Activated naive CD4-positive, alpha-beta T cell treated with anti-CD3 and anti-CD28 coated beads for 36 hours (primary cell): ENCODE measurements at regions of chr16 and their contacts with region 1.

Region 1: GRCh38 chr16:22001591-22001990 is 675 bp upstream of the PDZD9 start:
- DNase-seq: no peak
- H3K4me3 Mint-ChIP-seq: no peak overlapping the region
- H3K27ac Mint-ChIP-seq: no peak overlapping the region
- H3K4me1 Mint-ChIP-seq: peaks cover 7% of the 10 kb centered on the region
- H3K27me3 Mint-ChIP-seq: no peaks in the 10 kb centered on the region

Region 2: GRCh38 chr16:21990381-21990944 is 11.1 kb before region 1 on chr16:
- CTCF ChIA-PET with region 1: interaction called, 14 read pairs
- intact Hi-C with region 1: no loop called
- DNase-seq: no peak
- H3K4me3 Mint-ChIP-seq: no peak overlapping the region
- H3K27ac Mint-ChIP-seq: no peak overlapping the region
- H3K4me1 Mint-ChIP-seq: peaks cover 7% of the 10 kb centered on the region
- H3K27me3 Mint-ChIP-seq: no peaks in the 10 kb centered on the region

Region 3: DNA sequence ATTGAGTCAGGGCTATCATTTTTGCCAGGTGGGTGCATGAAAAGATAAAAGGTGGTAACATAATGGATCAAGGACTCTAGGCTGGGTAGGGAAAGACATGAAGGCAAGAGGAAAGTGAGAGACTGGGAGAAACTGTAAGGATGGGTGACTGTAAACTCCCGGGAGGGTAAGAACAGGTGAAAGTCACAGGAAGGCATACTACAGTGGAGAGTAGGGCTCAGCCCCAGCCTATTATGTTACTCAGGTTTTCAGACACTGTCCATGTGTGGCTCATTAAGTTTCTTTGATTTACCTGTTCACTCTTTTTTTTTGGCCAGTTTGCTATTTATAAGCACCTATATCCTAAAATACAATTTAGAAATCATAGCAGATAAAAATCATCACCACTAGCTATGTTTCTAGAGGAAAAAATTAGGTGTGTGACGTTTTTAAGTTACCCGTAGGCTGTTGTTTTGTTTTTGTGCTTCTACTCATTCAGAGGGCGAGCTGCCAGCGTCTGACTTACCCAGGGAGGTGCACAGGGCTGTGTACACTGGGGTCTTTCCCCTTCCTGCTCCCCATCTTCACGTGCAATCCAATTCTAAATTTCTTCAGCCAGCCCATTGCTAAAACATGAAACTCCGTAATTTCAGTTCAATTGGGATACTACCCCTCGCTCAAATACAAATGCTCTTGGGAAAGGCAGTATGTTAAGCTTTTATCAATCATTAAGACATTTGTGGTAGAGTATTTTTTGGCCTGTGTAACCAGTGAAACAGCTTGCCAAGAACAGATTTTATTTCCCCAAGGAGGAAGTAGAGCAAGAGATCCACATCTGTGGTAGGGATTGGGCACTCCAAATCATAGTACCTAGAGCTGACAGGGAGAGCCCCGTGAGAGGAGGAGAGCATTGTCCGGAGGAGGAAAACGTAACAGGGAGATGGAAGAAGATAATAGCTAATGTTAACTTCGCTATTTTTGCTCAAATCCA is 69.1 kb after region 1 on chr16:
- CTCF ChIA-PET with region 1: interaction called, 308 read pairs
- intact Hi-C with region 1: no loop called
- DNase-seq: no peak
- H3K4me3 Mint-ChIP-seq: no peak overlapping the region
- H3K27ac Mint-ChIP-seq: no peak overlapping the region
- H3K4me1 Mint-ChIP-seq: peaks cover 6% of the 10 kb centered on the region
- H3K27me3 Mint-ChIP-seq: no peaks in the 10 kb centered on the region

Region 4: GRCh38 chr16:22098405-22099255 is 97.0 kb after region 1 on chr16:
- CTCF ChIA-PET with region 1: interaction called, 13 read pairs
- intact Hi-C with region 1: loop called (anchors 1 kb)
- DNase-seq: no peak
- H3K4me3 Mint-ChIP-seq: peak overlapping the region; percentile 28
- H3K27ac Mint-ChIP-seq: no peak overlapping the region
- H3K4me1 Mint-ChIP-seq: no peaks in the 10 kb centered on the region
- H3K27me3 Mint-ChIP-seq: peaks cover 5% of the 10 kb centered on the region

Region 5: DNA sequence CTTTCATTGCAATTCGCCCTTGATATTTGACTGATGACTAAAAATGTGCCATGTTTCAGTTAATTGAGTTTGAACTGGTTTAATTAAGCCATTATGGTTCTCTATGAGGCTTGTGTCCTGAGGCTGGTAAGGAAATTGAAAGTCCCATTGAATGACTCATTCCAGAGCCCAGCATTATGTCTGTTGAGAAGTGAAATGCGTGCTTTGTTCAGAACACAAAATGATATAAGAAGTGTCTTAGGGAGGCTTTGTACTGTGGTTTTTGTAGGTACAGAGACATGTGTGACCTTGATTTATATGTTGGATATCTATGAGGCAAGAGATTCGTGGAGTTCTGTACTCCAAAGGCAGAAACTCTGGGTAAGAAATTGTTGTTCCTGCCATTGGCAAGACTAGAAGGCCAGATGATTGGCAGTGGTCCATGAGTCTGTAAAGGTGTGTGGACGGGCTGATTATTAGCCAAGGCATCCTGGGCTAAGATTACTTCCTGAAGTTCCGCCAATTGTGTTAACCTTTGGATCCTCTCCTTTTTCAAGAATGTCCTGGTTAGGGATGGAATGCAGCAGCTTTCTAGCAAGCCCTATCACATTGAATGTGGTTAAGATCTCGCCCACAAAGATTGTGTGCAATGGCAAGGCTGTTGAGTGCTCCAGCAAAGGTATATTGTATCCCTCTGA is 612.8 kb after region 1 on chr16:
- CTCF ChIA-PET with region 1: no interaction called
- intact Hi-C with region 1: no loop called
- DNase-seq: no peak
- H3K4me3 Mint-ChIP-seq: no peak overlapping the region
- H3K27ac Mint-ChIP-seq: no peak overlapping the region
- H3K4me1 Mint-ChIP-seq: no peaks in the 10 kb centered on the region
- H3K27me3 Mint-ChIP-seq: peaks cover 2% of the 10 kb centered on the region